Activated T-helper 1 cell treated with anti-CD3 and anti-CD28 coated beads, Interleukin-12 subunit alpha, Interleukin-12 subunit beta, Interleukin-2, Interleukin-4 antibody, amounts not matched to agents 30 ng/mL and 10 ng/mL and 1 ng/mL, durations not matched to agents 14 hours and 24 hours and 36 hours (primary cell): ENCODE measurements at regions of chr16 and their contacts with region 1.

Region 1: DNA sequence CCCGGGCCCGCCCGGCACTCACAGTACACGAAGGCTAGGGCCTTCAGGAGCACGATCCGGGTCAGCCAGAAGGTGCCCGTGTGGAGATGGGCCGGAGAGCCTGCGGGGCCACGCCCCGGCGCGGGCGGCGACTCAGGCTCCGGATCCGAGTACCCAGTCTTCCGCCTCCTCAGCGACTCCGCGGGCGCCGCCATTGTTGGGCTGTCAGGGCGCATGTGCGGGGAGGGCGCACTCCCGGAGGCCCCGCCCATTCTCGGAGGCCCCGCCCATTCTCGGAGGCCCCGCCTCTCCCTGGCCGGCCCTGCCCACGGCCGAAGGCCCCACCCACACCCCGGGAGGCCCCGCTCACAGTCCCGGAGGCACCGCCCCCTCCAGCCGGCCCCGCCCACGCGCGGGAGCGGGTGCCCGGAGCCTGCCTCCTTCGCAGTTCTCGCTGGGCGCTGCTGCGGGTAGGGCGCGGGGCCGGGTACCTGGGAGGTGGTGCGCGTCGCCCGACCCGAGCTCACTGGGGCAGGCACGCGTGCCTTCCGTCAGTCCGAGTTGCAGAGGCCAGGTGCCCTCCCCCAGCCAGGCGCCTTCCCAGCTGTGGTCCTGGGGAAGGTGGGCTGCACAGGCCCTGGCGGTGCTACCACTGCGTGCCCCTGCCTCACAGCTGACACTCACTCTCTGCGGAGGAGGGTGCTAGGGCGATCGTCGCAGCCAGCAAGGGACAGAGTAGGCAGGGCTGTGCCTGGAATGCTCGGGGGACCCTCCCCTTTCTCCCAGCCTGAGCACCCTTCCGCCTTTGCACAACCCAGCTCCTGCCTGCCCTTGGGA is at the start of gene LMF1:
- DNase-seq: peak; percentile 94
- H3K4me3 Mint-ChIP-seq: peak within 1 kb of the TSS; percentile 77
- H3K27ac Mint-ChIP-seq: peak within 1 kb of the TSS; percentile 73
- H3K4me1 Mint-ChIP-seq: peaks cover 8% of the 10 kb centered on the region
- H3K27me3 Mint-ChIP-seq: peaks cover 9% of the 10 kb centered on the region
- total RNA-seq, gene LMF1: 6.8 and 10.4 TPM in 2 replicates

Region 2: DNA sequence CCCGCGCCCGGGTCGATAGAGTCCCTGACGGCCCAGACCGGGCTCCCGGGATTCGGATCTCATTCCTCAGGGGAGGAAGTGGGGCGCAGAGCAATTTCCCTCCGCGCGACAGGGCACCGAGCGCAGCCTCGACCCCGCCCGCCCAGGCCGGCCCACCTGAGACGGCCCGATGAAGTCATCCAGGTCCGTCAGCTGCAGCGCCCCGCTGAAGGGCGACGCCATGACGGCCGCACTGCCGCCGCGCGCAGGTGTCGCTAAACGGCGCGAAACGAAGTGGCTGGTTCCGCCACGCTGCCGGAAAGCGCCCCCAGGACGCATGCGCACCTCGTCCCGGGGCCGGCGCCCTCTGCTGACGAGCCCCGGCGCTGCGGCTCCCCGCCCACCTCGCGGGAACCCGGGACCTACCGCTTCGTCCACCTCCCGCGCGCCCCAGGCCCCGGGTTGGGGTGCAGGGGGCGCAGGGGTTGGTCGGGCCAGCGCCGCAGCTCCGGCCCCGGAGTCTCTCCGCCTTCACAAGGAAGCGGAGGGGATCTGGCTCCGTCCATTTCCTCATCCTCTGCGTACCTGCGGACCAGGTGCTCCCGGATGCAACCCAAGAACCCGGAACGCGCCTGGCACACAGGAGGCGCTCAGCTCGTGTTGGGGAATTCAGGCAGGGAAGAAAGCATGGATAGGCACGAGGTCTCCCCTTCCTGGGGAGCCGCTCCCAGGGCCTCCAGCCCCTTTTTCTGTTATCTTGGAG is 230.0 kb before region 1 on chr16 and contains the start of gene CIAO3:
- intact Hi-C with region 1: loop called (anchors 10 kb)
- DNase-seq: peak; percentile 92
- H3K4me3 Mint-ChIP-seq: peak within 1 kb of the TSS; percentile 85
- H3K27ac Mint-ChIP-seq: peak within 1 kb of the TSS; percentile 73
- H3K4me1 Mint-ChIP-seq: peaks cover 9% of the 10 kb centered on the region
- H3K27me3 Mint-ChIP-seq: no peaks in the 10 kb centered on the region
- total RNA-seq, gene CIAO3: 41.0 and 43.1 TPM in 2 replicates

Region 3: GRCh38 chr16:886084-886543 is 84.9 kb before region 1 on chr16:
- intact Hi-C with region 1: no loop called
- DNase-seq: no peak
- H3K4me3 Mint-ChIP-seq: no peak overlapping the region
- H3K27ac Mint-ChIP-seq: no peak overlapping the region
- H3K4me1 Mint-ChIP-seq: no peaks in the 10 kb centered on the region
- H3K27me3 Mint-ChIP-seq: no peaks in the 10 kb centered on the region

Region 4: DNA sequence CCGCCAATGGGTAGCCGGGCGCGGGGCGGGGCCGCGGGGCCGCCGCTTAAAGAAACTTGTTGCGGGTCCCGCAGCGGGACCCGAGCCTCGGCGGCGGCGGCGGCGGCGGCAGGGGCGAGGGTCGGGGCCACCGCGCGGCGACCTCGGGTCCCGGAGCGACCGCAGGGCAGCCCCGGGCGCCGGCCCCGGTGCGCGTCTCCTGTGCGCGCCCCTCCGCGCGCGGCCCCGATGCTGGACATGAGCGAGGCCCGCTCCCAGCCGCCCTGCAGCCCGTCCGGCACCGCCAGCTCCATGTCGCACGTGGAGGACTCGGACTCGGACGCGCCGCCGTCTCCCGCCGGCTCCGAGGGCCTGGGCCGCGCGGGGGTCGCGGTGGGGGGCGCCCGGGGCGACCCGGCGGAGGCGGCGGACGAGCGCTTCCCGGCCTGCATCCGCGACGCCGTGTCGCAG is 10.7 kb after region 1 on chr16 and contains the start of gene SOX8:
- intact Hi-C with region 1: loop called (anchors 1 kb)
- DNase-seq: no peak
- H3K4me3 Mint-ChIP-seq: peak within 1 kb of the TSS; percentile 75
- H3K27ac Mint-ChIP-seq: no peak within 1 kb of the TSS
- H3K4me1 Mint-ChIP-seq: no peaks in the 10 kb centered on the region
- H3K27me3 Mint-ChIP-seq: peaks cover 9% of the 10 kb centered on the region
- total RNA-seq, gene SOX8: 0.47 and 0.61 TPM in 2 replicates

Region 5: DNA sequence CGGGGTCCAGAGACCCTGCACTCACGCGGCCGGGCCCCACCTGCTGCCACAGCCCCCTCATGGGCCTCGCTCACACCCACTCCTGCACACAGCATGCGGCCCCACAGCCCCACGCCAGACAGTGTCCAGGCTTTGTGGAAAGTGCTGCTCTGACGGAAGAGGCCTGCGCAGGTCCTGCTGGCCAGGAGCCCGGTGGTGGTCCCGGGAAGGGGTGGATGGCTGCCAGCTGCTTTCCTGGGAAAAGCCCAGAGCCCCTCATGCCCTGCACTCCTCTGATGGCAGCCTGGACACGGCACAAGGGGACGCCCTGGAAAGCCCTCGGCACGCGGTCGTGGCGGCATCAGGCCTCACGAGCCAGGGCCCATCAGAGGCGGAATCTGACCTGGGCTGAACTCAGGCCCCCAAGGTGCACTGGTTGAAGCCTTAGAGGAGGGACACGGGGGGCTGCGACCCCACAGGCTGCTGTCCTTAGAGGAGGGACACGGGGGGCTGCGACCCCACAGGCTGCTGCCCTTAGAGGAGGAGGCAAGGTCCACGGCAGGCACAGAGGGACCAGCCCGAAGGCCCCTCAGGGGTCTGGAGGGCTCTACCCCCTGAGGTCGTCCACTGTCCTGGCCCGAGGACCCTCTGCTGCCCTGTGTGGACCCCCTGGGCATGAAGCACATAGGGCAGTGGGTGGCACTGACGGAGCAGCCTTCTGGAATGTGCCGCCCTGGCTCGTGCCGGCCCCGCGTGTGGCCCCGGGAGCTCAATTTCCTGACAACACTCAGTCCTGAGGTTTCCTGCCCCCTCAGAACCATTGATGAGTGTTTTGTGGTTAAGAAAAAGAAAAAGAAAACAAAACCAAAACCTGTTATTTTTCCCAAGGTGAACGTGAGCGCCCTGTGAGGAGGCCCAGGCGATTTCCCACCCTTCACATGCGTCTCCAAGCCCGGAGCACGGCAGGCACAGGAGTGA is 32.7 kb after region 1 on chr16:
- intact Hi-C with region 1: loop called (anchors 1 kb)
- DNase-seq: peak; percentile 29
- H3K4me3 Mint-ChIP-seq: peak overlapping the region; percentile 11
- H3K27ac Mint-ChIP-seq: no peak overlapping the region
- H3K4me1 Mint-ChIP-seq: peaks cover 11% of the 10 kb centered on the region
- H3K27me3 Mint-ChIP-seq: peaks cover 18% of the 10 kb centered on the region

Region 6: DNA sequence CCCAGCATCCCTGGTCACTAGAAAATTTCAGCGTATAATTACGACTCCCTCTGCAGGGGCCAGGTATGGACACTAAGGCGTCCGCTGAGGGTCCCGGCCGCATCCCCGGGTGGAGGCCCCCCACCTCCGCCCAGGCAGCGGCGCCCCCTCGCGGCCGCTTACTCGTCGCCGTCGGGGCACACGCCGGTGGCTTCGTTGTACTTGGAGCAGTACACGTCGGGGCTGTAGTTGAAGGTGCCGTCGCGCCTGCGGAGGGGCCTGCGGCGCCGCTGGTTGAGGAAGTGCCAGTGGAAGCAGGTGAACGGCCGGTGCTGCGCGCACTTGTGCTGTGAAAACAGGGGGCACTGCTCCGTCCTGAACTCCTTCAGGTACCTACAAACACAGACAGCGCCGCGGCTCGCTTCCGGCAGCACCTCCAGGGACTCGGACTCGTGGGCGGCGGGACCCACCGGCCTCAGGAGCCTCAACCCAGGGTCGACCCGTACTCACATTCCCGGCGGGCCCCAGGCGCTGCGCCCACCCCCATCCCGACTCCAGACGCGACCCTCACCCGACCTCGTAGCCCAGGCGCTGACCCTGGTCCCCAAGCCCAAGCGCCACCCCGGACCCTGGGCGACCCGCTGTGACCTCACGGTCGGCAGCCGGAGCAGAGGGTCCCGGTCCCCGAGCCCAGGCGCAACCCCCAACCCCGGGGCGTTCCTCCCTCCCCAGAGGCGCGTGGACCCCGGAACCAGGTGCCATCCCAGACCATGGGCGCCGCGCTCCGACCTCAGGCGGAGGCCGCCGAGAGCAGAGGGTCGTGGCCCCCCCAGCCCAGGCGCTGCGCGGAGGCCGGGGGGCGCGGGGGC is 442.9 kb after region 1 on chr16:
- intact Hi-C with region 1: loop called (anchors 5 kb)
- DNase-seq: peak; percentile 58
- H3K4me3 Mint-ChIP-seq: peak overlapping the region; percentile 83
- H3K27ac Mint-ChIP-seq: peak overlapping the region; percentile 75
- H3K4me1 Mint-ChIP-seq: no peaks in the 10 kb centered on the region
- H3K27me3 Mint-ChIP-seq: no peaks in the 10 kb centered on the region